Activated CD4-positive, alpha-beta memory T cell treated with anti-CD3 and anti-CD28 coated beads, Interleukin-2, amount 10 ng/mL, durations not matched to agents 7 days and 5 days (primary cell): ENCODE measurements at regions of chr22 and their contacts with region 1.

Region 1: GRCh38 chr22:22745225-22746060 is 101.0 kb downstream of the GGTLC2 start:
- DNase-seq: peak; percentile 51
- H3K4me3 Mint-ChIP-seq: no peak overlapping the region
- H3K27ac Mint-ChIP-seq: no peak overlapping the region
- H3K4me1 Mint-ChIP-seq: peaks cover 2% of the 10 kb centered on the region
- H3K27me3 Mint-ChIP-seq: peaks cover 29% of the 10 kb centered on the region

Region 2: DNA sequence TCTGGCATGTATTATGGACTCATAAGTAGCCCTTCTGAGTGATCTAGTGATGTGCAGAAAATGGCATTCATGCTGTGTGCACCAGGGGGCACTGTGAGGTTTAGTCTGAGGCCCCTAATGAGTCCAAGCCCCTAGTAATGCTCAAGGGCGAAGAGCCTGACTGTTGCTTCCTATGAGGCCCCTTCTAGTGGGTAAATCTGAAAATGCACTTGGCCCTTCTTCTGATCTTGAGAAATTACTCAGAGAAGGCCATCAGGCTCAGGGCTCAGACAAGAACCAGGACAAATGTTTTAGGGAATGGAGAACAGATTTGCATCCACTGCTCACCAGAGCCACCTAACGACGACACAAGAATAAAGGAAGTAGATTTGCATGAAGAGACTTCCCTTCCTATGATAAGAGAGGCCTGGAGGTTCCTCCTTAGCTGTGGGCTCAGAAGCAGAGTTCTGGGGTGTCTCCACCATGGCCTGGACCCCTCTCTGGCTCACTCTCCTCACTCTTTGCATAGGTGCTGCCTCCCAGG is 25.2 kb before region 1 on chr22:
- CTCF ChIA-PET with region 1: interaction called, 17 read pairs
- POLR2A ChIA-PET with region 1: no interaction called
- DNase-seq: peak; percentile 52
- H3K4me3 Mint-ChIP-seq: no peak overlapping the region
- H3K27ac Mint-ChIP-seq: peak overlapping the region; percentile 52
- H3K4me1 Mint-ChIP-seq: peaks cover 32% of the 10 kb centered on the region
- H3K27me3 Mint-ChIP-seq: peaks cover 2% of the 10 kb centered on the region

Region 3: DNA sequence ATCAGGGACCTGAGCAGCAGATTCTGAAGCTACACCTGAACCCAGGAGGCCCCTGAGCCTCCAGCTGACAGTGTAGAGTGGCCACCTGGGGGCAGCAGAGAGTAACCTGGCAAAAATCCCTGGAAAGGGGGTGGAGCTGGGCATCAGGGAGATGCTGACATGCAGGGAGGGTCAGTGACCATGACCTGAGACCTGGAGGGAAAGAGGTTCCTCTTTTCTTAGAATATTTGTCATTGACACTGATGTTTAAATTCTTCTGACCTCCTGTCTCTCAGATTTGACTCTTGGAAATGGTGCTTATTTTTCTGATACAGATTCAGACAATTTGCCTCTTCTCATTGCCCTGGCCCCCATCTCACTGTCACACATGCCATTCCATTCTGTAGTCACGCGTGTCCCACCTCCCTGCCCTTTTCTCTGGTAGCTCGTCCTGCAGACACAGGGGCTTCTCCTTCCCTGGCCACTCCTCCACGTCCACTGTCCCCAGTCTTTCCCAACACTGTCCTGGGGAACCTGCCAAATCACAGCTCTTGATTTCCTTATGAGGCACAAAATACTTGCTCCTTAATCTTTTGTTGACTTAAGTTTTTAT is 24.9 kb after region 1 on chr22:
- CTCF ChIA-PET with region 1: interaction called, 14 read pairs
- POLR2A ChIA-PET with region 1: no interaction called
- DNase-seq: peak; percentile 50
- H3K4me3 Mint-ChIP-seq: no peak overlapping the region
- H3K27ac Mint-ChIP-seq: no peak overlapping the region
- H3K4me1 Mint-ChIP-seq: no peaks in the 10 kb centered on the region
- H3K27me3 Mint-ChIP-seq: peaks cover 9% of the 10 kb centered on the region